CD8-positive, alpha-beta T cell (primary cell): ENCODE measurements at regions of chr15 and their contacts with region 1.

Region 1: DNA sequence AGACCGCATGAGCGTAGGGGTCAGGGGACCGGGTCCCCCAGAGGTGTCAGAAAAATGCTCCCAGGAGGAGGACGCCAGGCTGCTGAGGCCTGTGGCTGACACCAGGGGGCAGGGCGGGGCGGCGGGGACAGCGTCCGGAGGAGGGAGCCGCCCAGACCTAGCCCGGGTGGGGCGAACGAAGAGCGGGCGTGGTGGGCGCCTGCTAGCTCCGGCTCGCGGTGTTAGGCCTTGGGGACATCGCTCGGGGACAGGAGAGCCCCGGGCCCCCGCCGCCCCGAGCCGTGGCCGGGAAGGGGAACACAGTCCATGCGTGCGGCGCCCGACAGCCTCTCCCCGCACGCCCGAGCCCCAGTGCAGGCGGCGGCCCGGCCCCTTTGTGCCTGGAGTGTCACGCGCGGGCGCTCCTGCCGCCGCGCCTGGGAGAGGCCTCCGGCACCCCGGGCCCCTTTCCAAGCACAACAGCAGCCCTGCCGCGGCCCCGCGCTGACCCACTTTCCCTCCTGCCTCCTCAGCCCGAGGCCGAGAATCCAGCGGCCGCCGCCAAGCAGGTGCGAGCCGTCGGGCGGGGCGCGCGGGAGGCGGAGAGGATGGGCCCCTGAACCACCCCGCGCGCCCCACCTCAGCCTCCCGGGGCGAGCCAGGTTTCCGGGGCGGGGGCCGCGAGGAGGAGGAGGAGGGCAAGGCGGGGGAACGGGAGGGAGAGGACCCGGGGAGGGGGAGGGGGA is 111.0 kb upstream of the KLF13 start:
- DNase-seq: peak; percentile 56 to 91 (median 84)
- ATAC-seq: peak; percentile 76
- H3K4me3 ChIP-seq: peak overlapping the region; percentile 32 to 55
- H3K4me3 Mint-ChIP-seq: peak overlapping the region; percentile 56
- H3K27ac ChIP-seq: peak overlapping the region; percentile 56 to 75
- H3K27ac Mint-ChIP-seq: peak overlapping the region; percentile 83
- H3K4me1 ChIP-seq: peaks cover 21% of the 10 kb centered on the region
- H3K4me1 Mint-ChIP-seq: peaks cover 30% of the 10 kb centered on the region
- H3K27me3 ChIP-seq: no peaks in the 10 kb centered on the region
- H3K27me3 Mint-ChIP-seq: no peaks in the 10 kb centered on the region
- CTCF ChIP-seq: peak; percentile 73

Region 2: GRCh38 chr15:30991255-30992072 is 224.2 kb before region 1 on chr15 and contains the start of gene MTMR10:
- CTCF ChIA-PET with region 1: no interaction called
- POLR2A ChIA-PET with region 1: no interaction called
- intact Hi-C with region 1: loop called in 1 of 2 experiments (anchors 5 kb)
- DNase-seq: peak; percentile 62 to 86 (median 69)
- ATAC-seq: peak; percentile 93
- H3K4me3 ChIP-seq: peak within 1 kb of the TSS; percentile 71 to 93
- H3K4me3 Mint-ChIP-seq: peak within 1 kb of the TSS; percentile 94
- H3K27ac ChIP-seq: peak within 1 kb of the TSS; percentile 75 to 77
- H3K27ac Mint-ChIP-seq: peak within 1 kb of the TSS; percentile 95
- H3K4me1 ChIP-seq: peaks cover 26% of the 10 kb centered on the region
- H3K4me1 Mint-ChIP-seq: peaks cover 34% of the 10 kb centered on the region
- H3K27me3 ChIP-seq: no peaks in the 10 kb centered on the region
- H3K27me3 Mint-ChIP-seq: no peaks in the 10 kb centered on the region
- CTCF ChIP-seq: no peak
- total RNA-seq, gene MTMR10: 54.7 to 56.4 TPM

Region 3: GRCh38 chr15:31200735-31201151 is 14.9 kb before region 1 on chr15:
- CTCF ChIA-PET with region 1: interaction called, 15 read pairs
- POLR2A ChIA-PET with region 1: interaction called, 3 read pairs
- intact Hi-C with region 1: no loop called
- DNase-seq: peak; percentile 52 to 83 (median 71)
- ATAC-seq: peak; percentile 76
- H3K4me3 ChIP-seq: no peak overlapping the region
- H3K4me3 Mint-ChIP-seq: no peak overlapping the region
- H3K27ac ChIP-seq: no peak overlapping the region
- H3K27ac Mint-ChIP-seq: no peak overlapping the region
- H3K4me1 ChIP-seq: peaks cover 20% of the 10 kb centered on the region
- H3K4me1 Mint-ChIP-seq: peaks cover 20% of the 10 kb centered on the region
- H3K27me3 ChIP-seq: no peaks in the 10 kb centered on the region
- H3K27me3 Mint-ChIP-seq: no peaks in the 10 kb centered on the region
- CTCF ChIP-seq: peak; percentile 51

Region 4: GRCh38 chr15:31265871-31266711 is 50.4 kb after region 1 on chr15:
- CTCF ChIA-PET with region 1: interaction called, 29 read pairs
- POLR2A ChIA-PET with region 1: interaction called, 29 read pairs
- intact Hi-C with region 1: loop called (anchors 1 to 5 kb)
- DNase-seq: peak; percentile 51 to 90 (median 77)
- ATAC-seq: peak; percentile 81
- H3K4me3 ChIP-seq: peak overlapping the region in 1 of 2 experiments; percentile 42
- H3K4me3 Mint-ChIP-seq: peak overlapping the region; percentile 71
- H3K27ac ChIP-seq: peak overlapping the region; percentile 71 to 72
- H3K27ac Mint-ChIP-seq: peak overlapping the region; percentile 95
- H3K4me1 ChIP-seq: peaks cover 69% of the 10 kb centered on the region
- H3K4me1 Mint-ChIP-seq: peaks cover 96% of the 10 kb centered on the region
- H3K27me3 ChIP-seq: no peaks in the 10 kb centered on the region
- H3K27me3 Mint-ChIP-seq: no peaks in the 10 kb centered on the region
- CTCF ChIP-seq: no peak

Region 5: GRCh38 chr15:31344823-31345605 is 129.4 kb after region 1 on chr15:
- CTCF ChIA-PET with region 1: interaction called, 6 read pairs
- POLR2A ChIA-PET with region 1: interaction called, 3 read pairs
- intact Hi-C with region 1: loop called in 1 of 2 experiments (anchors 5 kb)
- DNase-seq: peak in 1 of 9 experiments; percentile 68
- ATAC-seq: no peak
- H3K4me3 ChIP-seq: peak overlapping the region; percentile 55 to 72
- H3K4me3 Mint-ChIP-seq: peak overlapping the region; percentile 91
- H3K27ac ChIP-seq: peak overlapping the region; percentile 70 to 78
- H3K27ac Mint-ChIP-seq: peak overlapping the region; percentile 97
- H3K4me1 ChIP-seq: peaks cover 99% of the 10 kb centered on the region
- H3K4me1 Mint-ChIP-seq: peaks cover 98% of the 10 kb centered on the region
- H3K27me3 ChIP-seq: no peaks in the 10 kb centered on the region
- H3K27me3 Mint-ChIP-seq: no peaks in the 10 kb centered on the region
- CTCF ChIP-seq: no peak

Region 6: GRCh38 chr15:31391687-31392671 is 176.3 kb after region 1 on chr15:
- CTCF ChIA-PET with region 1: interaction called, 5 read pairs
- POLR2A ChIA-PET with region 1: no interaction called
- intact Hi-C with region 1: loop called in 1 of 2 experiments (anchors 5 kb)
- DNase-seq: peak; percentile 62 to 92 (median 86)
- ATAC-seq: peak; percentile 82
- H3K4me3 ChIP-seq: peak overlapping the region; percentile 86 to 95
- H3K4me3 Mint-ChIP-seq: peak overlapping the region; percentile 91
- H3K27ac ChIP-seq: peak overlapping the region; percentile 80 to 81
- H3K27ac Mint-ChIP-seq: peak overlapping the region; percentile 95
- H3K4me1 ChIP-seq: peaks cover 44% of the 10 kb centered on the region
- H3K4me1 Mint-ChIP-seq: peaks cover 61% of the 10 kb centered on the region
- H3K27me3 ChIP-seq: no peaks in the 10 kb centered on the region
- H3K27me3 Mint-ChIP-seq: no peaks in the 10 kb centered on the region
- CTCF ChIP-seq: no peak

Region 7: GRCh38 chr15:31483053-31483985 is 267.7 kb after region 1 on chr15:
- CTCF ChIA-PET with region 1: interaction called, 95 read pairs
- POLR2A ChIA-PET with region 1: interaction called, 8 read pairs
- intact Hi-C with region 1: loop called (anchors 1 kb)
- DNase-seq: peak; percentile 15 to 83 (median 60)
- ATAC-seq: peak; percentile 58
- H3K4me3 ChIP-seq: peak overlapping the region; percentile 60 to 67
- H3K4me3 Mint-ChIP-seq: peak overlapping the region; percentile 95
- H3K27ac ChIP-seq: peak overlapping the region in 1 of 2 experiments; percentile 59
- H3K27ac Mint-ChIP-seq: peak overlapping the region; percentile 97
- H3K4me1 ChIP-seq: peaks cover 44% of the 10 kb centered on the region
- H3K4me1 Mint-ChIP-seq: peaks cover 66% of the 10 kb centered on the region
- H3K27me3 ChIP-seq: peaks cover 0 to 3% of the 10 kb centered on the region in 2 experiments
- H3K27me3 Mint-ChIP-seq: no peaks in the 10 kb centered on the region
- CTCF ChIP-seq: no peak